KBM-7 (cell line): ENCODE measurements at regions of chr9 and their contacts with region 1.

Region 1: GRCh38 chr9:112890106-112891081 is at the start of gene SLC46A2:
- DNase-seq: no peak

Region 2: GRCh38 chr9:112665347-112665746 is 225.0 kb before region 1 on chr9:
- in situ Hi-C with region 1: no loop called
- DNase-seq: no peak

Region 3: GRCh38 chr9:112844771-112845542 is 45.4 kb before region 1 on chr9:
- in situ Hi-C with region 1: loop called (anchors 10 kb)
- DNase-seq: peak; percentile 81

Region 4: DNA sequence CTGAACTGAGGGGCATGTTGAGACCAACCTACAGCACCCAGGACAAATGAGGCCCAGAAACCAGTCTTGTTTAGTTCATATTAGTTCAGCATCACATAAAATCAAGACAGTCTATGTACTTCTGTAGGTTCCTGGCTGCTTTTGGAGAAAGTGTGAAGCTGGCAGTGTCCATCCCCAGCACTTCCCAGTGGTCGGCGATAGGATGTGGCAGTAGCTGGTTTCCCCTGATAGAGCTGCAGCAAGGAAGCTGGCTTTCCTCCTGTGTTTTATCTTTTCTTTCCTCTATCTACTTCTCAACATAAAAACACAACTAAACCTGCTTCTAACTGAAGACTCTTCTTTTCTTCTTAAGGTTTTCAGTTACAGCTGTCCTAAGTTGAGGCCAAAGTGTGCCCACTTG is 43.3 kb after region 1 on chr9:
- in situ Hi-C with region 1: no loop called
- DNase-seq: no peak

Region 5: DNA sequence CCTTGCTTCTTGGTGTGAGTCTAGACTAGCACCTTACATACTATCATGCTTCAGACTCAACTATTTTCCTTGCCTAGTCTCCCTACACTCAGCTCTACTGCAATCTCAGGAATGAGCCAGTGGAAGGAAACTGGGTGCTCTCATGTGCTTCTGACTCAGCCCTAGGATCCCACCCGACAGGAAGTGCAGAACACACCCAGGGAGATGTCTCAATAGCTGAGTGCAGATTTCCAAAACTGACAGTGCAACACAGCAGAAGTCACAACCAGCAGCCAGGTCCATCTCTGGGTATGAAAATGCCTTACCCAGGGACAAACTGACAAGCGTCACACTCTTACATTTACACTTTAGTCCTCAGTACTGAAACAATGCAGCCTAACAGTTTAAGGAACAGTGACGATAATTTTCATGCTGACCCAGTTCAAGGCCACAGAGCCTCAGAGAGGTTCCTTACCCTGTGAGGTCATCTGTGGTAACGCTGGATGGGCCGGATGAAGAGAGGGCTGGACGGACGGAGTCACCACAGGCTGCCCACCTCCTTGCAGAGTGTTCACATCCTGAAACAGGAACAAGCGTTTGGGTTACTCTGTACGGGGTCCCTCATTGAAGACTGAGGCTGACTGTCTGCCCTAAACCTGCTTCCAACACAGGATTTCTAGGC is 297.7 kb after region 1 on chr9:
- in situ Hi-C with region 1: no loop called
- DNase-seq: no peak